Dendritic cell treated with granulocyte-macrophage colony-stimulating factor and Interleukin-4, amounts not matched to agents 40 ng/mL and 50 ng/mL, for 4 days (primary cell): ENCODE measurements at regions of chr4 and their contacts with region 1.

Region 1: DNA sequence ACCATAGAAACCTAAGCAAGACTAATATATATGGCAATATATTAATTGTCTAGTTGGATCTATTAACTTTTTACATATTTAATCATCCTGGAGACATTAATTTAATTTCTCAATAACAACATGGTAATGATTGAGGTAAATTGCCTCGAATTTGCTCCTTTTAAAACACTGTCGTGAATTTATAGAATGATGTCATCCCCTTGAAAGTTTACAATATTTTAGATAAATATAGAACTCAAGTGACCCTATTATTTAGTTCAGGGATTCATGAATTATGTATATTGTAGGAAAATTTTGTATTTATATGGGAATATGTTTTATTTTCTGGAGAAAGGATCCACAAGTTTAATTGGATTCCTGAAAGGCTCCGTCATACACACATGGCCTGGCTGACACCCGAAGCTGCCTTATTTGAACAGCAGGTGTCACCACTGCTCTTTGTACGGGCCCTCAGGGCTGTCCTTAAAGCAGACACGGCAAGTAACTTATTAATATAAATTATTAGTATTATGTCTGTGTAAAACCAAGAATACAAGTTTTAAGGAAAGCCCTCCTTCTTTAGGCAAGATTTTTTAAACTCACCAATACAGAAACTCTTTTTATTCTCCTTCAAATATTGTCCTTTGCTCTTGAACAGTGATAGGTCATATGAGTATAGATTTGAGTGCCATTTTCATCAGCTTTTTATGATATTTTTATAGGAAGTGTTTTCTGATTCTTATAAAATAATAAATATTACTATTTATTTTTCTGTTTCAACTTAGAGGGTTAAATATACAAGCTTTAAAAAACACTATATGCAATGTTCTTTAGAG is 1.9 kb upstream of the PLRG1 start:
- H3K4me3 Mint-ChIP-seq: no peak overlapping the region
- H3K27ac Mint-ChIP-seq: no peak overlapping the region
- H3K4me1 Mint-ChIP-seq: peaks cover 14% of the 10 kb centered on the region
- H3K27me3 Mint-ChIP-seq: no peaks in the 10 kb centered on the region

Region 2: DNA sequence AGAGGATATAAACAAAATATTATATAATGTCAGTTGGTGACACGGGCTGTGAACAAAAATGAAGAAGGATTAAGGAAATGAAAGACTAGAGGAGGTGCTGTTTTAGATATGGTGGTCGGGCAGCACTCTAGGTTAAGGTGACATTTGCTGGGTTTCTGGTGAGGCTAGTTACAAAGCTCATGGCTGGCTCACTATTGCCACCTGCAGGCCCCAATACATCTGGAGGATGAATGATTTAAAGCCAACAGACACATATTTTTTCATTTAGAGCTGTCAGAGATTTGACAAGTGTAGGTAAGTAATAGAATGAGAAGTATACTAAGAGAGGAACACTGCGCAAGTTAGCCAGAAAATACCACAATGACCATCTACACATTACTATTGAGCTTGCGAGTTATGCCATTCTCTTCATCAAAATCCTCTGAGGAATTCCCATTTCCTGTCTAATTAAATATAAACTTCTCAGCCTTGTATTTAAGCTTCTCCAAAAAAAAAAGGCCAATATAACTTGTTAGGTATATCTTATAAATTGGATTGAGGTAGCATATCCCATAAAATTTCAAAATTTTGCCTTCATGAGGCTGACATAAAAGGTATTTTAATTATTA is 66.7 kb after region 1 on chr4:
- intact Hi-C with region 1: loop called (anchors 1 kb)
- H3K4me3 Mint-ChIP-seq: no peak overlapping the region
- H3K27ac Mint-ChIP-seq: no peak overlapping the region
- H3K4me1 Mint-ChIP-seq: no peaks in the 10 kb centered on the region
- H3K27me3 Mint-ChIP-seq: no peaks in the 10 kb centered on the region

Region 3: GRCh38 chr4:154779362-154779947 is 227.4 kb after region 1 on chr4:
- intact Hi-C with region 1: loop called (anchors 10 kb)
- H3K4me3 Mint-ChIP-seq: no peak overlapping the region
- H3K27ac Mint-ChIP-seq: no peak overlapping the region
- H3K4me1 Mint-ChIP-seq: no peaks in the 10 kb centered on the region
- H3K27me3 Mint-ChIP-seq: peaks cover 15% of the 10 kb centered on the region

Region 4: GRCh38 chr4:155353923-155354540 is 802.0 kb after region 1 on chr4:
- intact Hi-C with region 1: loop called (anchors 5 kb)
- H3K4me3 Mint-ChIP-seq: no peak overlapping the region
- H3K27ac Mint-ChIP-seq: no peak overlapping the region
- H3K4me1 Mint-ChIP-seq: no peaks in the 10 kb centered on the region
- H3K27me3 Mint-ChIP-seq: no peaks in the 10 kb centered on the region

Region 5: GRCh38 chr4:155367608-155368007 is 815.5 kb after region 1 on chr4:
- intact Hi-C with region 1: loop called (anchors 2 kb)
- H3K4me3 Mint-ChIP-seq: no peak overlapping the region
- H3K27ac Mint-ChIP-seq: no peak overlapping the region
- H3K4me1 Mint-ChIP-seq: no peaks in the 10 kb centered on the region
- H3K27me3 Mint-ChIP-seq: no peaks in the 10 kb centered on the region

Region 6: GRCh38 chr4:155787113-155787710 is 1235.1 kb after region 1 on chr4:
- intact Hi-C with region 1: loop called (anchors 10 kb)
- H3K4me3 Mint-ChIP-seq: no peak overlapping the region
- H3K27ac Mint-ChIP-seq: no peak overlapping the region
- H3K4me1 Mint-ChIP-seq: no peaks in the 10 kb centered on the region
- H3K27me3 Mint-ChIP-seq: no peaks in the 10 kb centered on the region